BJ (cell line): ENCODE measurements at regions of chr19 and their contacts with region 1.

Region 1: GRCh38 chr19:2273356-2274184 is 8.4 kb downstream of the PEAK3 start:
- DNase-seq: no peak
- H3K4me3 ChIP-seq: peak overlapping the region; percentile 32
- H3K27me3 ChIP-seq: no peaks in the 10 kb centered on the region
- CTCF ChIP-seq: peak; percentile 84

Region 2: DNA sequence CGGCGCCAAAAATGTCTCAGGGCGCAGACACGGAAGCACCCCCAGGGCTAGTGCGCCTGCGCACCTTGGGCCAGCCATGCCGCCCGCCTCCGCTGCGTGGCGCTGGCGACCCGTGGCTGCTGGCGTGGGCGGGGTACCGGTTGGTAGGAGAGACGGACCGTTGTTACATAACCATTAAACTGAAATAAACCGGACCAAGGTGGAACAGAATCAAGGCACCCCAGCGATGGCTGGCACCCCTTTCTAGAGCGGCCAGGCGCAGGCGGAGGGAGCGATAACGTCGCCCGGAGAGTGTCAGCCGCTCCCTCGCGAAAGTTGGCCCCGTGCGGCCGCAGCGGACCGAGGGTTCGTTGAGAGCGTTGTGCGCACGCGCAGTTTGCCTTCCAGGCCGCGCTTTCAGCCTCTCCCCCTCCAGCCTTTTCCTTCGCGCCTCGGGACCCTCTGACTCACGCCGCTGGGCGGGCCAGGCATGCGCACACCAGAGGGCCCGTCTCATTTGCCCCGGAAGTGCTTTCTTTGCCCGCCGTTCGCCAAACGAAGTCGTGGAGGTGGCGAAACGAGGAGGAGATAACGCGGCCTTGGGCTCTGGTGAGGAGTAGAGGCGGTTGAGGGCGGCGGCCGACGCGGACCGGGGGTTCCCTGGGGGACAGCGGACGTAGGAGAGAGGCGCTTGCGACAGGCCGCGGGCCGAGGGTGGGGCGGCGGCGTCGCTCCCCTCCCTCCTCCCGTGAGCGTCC is 37.1 kb before region 1 on chr19 and contains the starts of genes PLEKHJ1 and SF3A2:
- CTCF ChIA-PET with region 1: interaction called, 13 read pairs
- POLR2A ChIA-PET with region 1: interaction called, 3 read pairs
- DNase-seq: peak; percentile 85
- H3K4me3 ChIP-seq: peak within 1 kb of the TSS; percentile 83
- H3K27me3 ChIP-seq: no peaks in the 10 kb centered on the region
- CTCF ChIP-seq: peak; percentile 95
- polyA plus RNA-seq, gene PLEKHJ1: 46.2 and 65.8 TPM in 2 replicates
- polyA plus RNA-seq, gene SF3A2: 8.9 and 12.2 TPM in 2 replicates

Region 3: DNA sequence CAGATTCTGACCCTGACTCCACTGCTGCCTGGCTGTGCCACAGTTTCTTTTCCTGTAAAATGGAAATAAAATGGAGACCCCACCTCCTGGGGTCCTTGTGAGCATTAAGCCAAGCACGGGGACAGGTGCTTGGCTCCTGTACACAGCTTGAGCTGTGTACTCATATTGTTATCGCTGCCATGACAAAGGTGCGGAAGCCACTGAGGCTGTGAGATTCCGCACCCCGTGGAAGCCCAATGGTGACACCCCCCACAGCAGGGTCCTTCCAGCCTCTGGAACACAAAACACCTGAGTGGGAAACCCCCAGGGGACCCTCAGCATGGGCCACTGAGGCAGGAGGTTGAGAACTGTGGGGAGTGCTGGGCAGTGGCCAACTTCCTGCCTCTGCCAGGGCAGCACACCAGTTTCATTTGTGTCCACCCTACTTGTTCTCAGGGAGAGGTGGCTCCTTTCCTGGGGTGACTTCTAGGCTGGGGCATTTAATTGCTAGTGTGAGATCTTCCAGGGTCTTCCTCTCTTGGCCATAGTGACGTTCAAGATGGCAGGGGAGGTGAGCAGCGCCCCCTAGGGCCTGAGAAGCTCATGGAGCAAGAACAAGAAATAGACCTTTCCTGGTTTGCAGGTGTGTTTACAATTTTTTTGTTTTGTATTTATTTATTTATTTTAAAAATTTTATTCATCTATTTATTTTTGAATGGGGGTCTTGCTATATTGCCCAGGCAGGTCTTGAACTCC is 12.0 kb before region 1 on chr19:
- CTCF ChIA-PET with region 1: interaction called, 15 read pairs
- POLR2A ChIA-PET with region 1: interaction called, 6 read pairs
- DNase-seq: no peak
- H3K4me3 ChIP-seq: no peak overlapping the region
- H3K27me3 ChIP-seq: no peaks in the 10 kb centered on the region
- CTCF ChIP-seq: peak; percentile 68

Region 4: GRCh38 chr19:2289714-2290435 is 16.3 kb after region 1 on chr19:
- CTCF ChIA-PET with region 1: interaction called, 34 read pairs
- POLR2A ChIA-PET with region 1: interaction called, 3 read pairs
- DNase-seq: no peak
- H3K4me3 ChIP-seq: peak overlapping the region; percentile 9
- H3K27me3 ChIP-seq: peaks cover 27% of the 10 kb centered on the region
- CTCF ChIP-seq: no peak

Region 5: DNA sequence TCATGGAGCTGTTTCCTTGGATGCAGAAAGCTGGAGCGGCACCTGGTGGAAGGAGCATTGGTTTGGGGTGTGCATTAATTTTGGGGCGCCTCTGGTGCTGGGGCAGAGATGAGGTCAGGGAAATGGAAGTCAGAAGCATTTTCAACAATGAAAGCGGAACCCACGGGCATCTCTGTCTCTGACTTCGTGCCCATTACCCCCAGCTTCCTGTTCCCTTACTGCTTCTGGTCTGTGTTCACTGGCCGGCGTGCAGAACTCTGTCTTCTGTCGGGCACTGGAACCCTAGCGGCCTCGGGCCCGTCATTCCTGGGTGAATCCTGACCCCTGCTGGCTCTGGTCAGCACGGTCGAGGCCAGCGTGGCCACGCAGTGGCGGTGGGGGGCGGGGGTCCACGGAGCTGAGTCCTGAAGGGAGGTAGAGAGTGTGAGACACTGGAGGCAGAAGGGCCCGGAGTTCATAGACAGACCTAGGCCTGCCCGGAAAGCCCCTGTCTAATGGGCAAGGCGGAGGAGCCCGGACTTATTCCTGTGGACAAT is 42.3 kb after region 1 on chr19:
- CTCF ChIA-PET with region 1: interaction called, 14 read pairs
- POLR2A ChIA-PET with region 1: no interaction called
- DNase-seq: no peak
- H3K4me3 ChIP-seq: no peak overlapping the region
- H3K27me3 ChIP-seq: peaks cover 4% of the 10 kb centered on the region
- CTCF ChIP-seq: peak; percentile 81

Region 6: GRCh38 chr19:2345794-2346663 is 72.5 kb after region 1 on chr19:
- CTCF ChIA-PET with region 1: no interaction called
- POLR2A ChIA-PET with region 1: no interaction called
- DNase-seq: no peak
- H3K4me3 ChIP-seq: no peak overlapping the region
- H3K27me3 ChIP-seq: no peaks in the 10 kb centered on the region
- CTCF ChIP-seq: no peak

Region 7: DNA sequence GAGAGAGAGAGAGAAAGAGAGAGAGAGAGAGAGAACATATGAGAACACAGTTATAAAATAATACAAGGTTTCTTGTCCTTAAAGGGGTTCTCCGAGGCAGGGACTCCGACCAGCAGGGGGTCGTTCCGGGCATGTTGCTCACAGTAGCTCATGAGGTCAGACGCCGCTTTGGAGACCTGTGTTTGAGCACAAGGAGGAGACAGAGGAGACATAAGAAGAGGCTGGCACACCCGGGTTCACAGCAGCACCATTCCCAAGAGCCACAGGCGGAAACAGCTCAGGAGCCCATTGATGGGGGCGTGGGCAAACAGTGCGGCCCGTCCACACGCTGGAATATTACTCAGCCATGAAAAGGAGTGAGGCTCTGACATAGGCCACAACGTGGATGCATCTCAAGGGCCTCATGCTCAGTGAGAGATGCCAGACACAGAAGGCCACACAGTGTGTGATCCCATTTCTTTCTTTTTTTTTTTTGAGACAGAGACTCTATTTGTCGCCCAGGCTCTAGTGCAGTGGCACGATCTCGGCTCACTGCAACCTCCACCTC is 241.5 kb after region 1 on chr19:
- CTCF ChIA-PET with region 1: no interaction called
- POLR2A ChIA-PET with region 1: interaction called, 13 read pairs
- DNase-seq: no peak
- H3K4me3 ChIP-seq: no peak overlapping the region
- H3K27me3 ChIP-seq: no peaks in the 10 kb centered on the region
- CTCF ChIP-seq: no peak